Aorta (tissue), 5 donors: ENCODE measurements at regions of chr10 and their contacts with region 1.

Region 1: GRCh38 chr10:124025660-124026588 is 67.5 kb downstream of the CHST15 start:
- DNase-seq: peak in 1 of 2 donors; percentile 59
- ATAC-seq: peak; percentile 61
- H3K4me3 ChIP-seq: no peak overlapping the region
- H3K27ac ChIP-seq: no peak overlapping the region
- H3K4me1 ChIP-seq: no peaks in the 10 kb centered on the region
- H3K27me3 ChIP-seq: no peaks in the 10 kb centered on the region

Region 2: DNA sequence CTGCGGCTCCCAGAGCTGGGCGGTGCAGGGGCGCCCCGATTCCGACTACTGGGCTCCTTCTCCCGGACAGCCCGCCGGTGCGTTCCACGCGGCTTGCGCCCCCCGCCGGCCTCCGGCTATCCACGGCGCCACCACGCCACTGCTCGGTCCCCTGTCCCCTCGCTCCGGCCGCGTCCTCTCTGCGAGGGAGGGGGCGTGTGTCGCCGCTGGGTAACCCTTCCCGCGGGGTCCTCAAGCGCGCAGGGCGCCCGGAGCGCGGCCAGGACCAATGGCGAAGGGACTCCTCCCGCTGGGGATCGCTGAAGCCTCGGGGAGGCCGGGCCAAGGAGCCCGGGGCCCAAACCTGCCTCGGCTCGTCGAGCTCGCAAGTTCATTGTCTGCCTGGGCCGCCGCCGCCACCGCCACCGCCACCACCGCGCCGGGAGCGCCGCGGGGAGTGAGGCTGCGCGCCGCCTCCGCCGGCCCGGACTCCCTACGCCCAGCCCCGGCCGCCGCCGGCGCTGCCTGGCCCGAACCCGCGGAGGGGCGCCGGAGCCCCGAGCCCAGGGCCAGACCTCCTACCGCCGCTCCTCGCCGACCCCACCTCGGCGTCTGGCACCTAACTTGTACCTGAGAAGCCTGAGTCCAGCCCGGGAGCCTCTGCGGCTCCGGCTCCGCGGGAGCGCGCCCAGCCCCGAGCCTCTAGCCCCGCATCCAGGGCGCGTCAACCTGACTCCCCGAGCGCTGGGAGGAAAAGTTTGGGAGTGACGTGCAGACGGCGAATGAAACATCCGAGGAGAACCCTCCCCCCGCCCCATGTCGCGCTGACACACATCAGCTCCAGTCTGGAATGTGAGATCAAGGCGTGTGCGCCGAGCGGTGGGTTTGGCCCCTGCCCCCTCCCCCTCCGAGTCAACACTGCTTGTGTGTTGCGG is 67.2 kb after region 1 on chr10 and contains the start of gene CHST15:
- intact Hi-C with region 1: loop called in 1 of 2 experiments (anchors 5 kb)
- DNase-seq: peak; percentile 68 to 87
- ATAC-seq: peak; percentile 39
- H3K4me3 ChIP-seq: peak within 1 kb of the TSS; percentile 62 to 81
- H3K27ac ChIP-seq: peak within 1 kb of the TSS in 1 of 2 donors; percentile 85
- H3K4me1 ChIP-seq: no peaks in the 10 kb centered on the region
- H3K27me3 ChIP-seq: no peaks in the 10 kb centered on the region
- total RNA-seq, gene CHST15: 39.9 to 43.8 TPM

Region 3: DNA sequence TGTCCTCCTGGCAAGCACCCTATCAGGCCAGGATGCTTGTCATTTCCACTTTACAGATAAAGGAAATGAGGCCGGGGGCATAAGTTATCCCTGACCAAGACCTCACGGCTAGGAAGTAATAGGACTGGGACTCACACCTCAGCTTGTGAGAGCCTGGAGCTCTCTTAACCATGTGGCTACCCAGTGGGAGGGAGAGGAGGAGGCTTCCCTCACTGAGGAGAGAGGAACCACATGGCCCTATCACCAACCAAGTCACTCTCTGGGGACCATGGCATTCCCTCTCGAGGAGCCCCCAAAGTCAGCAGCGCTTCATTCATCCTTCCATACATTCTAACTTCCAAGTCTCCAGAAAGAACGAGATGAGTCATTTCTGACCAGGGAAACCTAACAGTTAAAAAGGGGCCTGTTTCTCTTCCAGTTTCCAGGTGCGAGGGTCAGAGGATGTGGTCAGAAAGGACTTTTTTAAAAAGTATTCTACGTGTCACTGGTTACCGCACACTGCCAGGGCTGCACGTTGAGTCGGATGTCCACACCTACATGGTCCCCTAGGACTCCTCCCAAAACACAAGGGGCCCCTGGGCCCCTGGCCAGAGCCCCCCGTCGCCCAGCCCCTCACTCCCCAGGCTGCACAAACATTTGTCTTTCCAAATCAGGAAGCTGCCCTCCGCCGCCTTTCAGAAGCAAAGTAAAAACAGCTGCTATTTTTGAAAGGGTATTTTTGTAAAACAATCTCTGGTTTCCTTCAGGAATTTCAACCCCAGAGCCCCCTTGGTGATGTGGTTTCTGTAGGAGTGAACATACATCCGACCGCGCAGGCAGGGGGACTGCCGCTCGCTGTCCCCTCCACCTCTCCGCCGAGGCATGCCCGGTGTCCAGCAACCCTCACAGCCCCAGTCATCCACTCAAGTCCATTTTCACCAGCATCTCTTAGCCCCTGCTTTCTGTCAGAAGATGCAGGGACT is 195.7 kb after region 1 on chr10:
- intact Hi-C with region 1: loop called in 1 of 2 experiments (anchors 10 kb)
- DNase-seq: peak in 1 of 2 donors; percentile 57
- ATAC-seq: peak; percentile 5
- H3K4me3 ChIP-seq: no peak overlapping the region
- H3K27ac ChIP-seq: peak overlapping the region in 1 of 2 donors; percentile 10
- H3K4me1 ChIP-seq: peaks cover 0 to 9% of the 10 kb centered on the region in 2 donors
- H3K27me3 ChIP-seq: no peaks in the 10 kb centered on the region

Region 4: DNA sequence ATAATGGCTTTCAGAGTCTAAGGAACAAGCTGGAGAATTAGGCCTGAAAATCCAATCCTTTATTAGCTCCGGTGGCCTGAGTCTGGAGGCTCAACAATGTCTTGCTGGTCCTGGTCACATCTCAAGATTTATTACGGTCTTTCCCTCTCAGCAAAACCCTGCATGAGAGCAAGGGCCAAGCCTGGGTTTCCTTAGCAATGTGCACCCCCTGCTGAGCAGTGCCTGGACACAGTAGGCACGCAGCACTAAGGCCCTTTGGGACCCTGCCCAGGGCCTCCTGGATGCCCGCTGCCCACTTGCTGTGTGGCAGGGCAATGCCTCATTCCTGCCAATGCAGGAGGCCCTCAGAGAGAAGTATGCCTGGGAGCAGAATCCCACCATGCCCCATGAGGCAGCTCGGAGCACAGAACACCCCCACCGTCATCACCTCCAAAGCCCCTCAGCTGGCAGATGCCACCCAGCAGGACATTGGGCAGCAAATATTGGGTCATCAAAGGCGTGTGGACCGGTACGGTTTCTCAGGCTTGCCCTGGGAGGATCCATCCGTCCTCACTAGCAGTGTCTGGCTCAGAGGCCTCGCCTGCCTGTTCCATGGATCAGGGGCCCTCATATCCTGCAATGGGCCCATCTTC is 236.4 kb after region 1 on chr10:
- intact Hi-C with region 1: loop called (anchors 5 to 10 kb)
- DNase-seq: peak in 1 of 2 donors; percentile 64
- ATAC-seq: peak; percentile 6
- H3K4me3 ChIP-seq: no peak overlapping the region
- H3K27ac ChIP-seq: no peak overlapping the region
- H3K4me1 ChIP-seq: no peaks in the 10 kb centered on the region
- H3K27me3 ChIP-seq: no peaks in the 10 kb centered on the region

Region 5: DNA sequence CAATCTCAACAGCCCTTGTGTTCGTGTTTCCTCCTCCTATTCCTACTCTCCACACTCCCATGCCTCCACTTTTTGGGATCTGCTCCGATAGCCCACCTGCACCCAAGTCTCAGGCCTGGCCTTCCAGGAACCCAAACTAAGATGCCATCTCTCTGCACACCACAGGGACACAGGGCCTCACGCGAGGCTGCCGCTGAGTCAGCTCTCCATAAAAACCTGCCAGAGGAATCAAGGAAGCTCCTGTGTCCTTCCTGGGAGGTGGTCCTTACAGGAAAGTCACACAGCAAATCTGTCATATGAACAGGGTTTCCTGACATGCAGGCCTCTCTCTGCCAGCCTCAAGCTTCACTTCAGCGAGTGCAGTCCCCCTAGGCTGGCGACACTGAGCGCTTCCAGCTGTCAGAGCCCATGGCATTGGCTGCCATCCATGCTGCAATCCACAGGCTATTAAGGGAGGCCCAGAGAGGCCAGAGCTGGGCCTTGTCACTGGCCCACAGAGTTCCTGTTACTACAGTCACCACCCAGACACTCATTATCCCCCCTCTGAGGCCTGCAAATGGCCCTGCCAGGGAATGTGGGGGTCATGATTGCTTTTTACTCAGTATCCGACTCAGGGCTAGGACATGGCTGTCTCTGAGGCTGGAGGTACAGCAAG is 241.4 kb after region 1 on chr10:
- intact Hi-C with region 1: loop called (anchors 5 to 10 kb)
- DNase-seq: peak; percentile 78 to 79
- ATAC-seq: peak; percentile 49
- H3K4me3 ChIP-seq: no peak overlapping the region
- H3K27ac ChIP-seq: no peak overlapping the region
- H3K4me1 ChIP-seq: no peaks in the 10 kb centered on the region
- H3K27me3 ChIP-seq: no peaks in the 10 kb centered on the region

Region 6: GRCh38 chr10:124388823-124389612 is 363.1 kb after region 1 on chr10:
- intact Hi-C with region 1: loop called (anchors 1 to 5 kb)
- DNase-seq: peak; percentile 92 to 98
- ATAC-seq: peak; percentile 95
- H3K4me3 ChIP-seq: no peak overlapping the region
- H3K27ac ChIP-seq: no peak overlapping the region
- H3K4me1 ChIP-seq: peaks cover 0 to 3% of the 10 kb centered on the region in 2 donors
- H3K27me3 ChIP-seq: no peaks in the 10 kb centered on the region